Activated T-helper 1 cell treated with anti-CD3 and anti-CD28 coated beads, Interleukin-12 subunit alpha, Interleukin-12 subunit beta, Interleukin-2, Interleukin-4 antibody, amounts not matched to agents 30 ng/mL and 10 ng/mL and 1 ng/mL, durations not matched to agents 14 hours and 24 hours and 36 hours (primary cell): ENCODE measurements at regions of chr20 and their contacts with region 1.

Region 1: DNA sequence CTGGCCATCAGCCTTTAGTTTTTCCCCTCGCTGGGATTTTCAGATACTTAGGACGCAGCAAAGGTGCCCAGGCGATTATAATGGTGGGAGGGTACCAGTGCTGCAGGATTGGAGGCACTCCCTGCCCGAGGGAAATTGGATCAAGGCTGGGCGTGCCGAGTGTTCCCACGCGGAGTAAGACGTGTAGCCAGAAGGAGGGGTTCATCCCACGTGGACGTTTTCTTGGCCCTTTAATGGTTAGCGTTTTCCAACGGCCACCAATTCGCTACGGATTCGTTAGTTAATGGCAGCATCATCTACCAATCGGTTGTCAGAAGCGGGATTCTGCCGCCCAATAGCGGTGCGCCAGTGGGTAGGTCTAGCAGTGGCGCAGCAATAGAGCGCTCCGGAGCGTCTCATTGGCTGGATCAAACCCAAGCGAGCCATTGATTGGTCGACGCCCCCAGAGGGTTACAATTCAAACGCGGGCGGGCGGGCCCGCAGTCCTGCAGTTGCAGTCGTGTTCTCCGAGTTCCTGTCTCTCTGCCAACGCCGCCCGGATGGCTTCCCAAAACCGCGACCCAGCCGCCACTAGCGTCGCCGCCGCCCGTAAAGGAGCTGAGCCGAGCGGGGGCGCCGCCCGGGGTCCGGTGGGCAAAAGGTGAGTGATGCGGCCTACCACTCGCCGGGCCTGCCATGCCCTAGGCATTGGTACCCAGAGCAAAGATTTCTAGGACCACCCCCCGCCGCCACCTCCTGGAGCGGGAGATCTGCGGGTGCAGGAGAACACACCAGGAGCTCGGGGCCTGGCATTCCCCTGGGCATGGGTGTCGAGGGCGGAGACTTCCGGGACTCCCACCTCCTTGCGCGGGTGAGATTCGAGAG is at the start of gene UBE2C:
- DNase-seq: peak; percentile 95
- H3K4me3 Mint-ChIP-seq: peak within 1 kb of the TSS; percentile 89
- H3K27ac Mint-ChIP-seq: peak within 1 kb of the TSS; percentile 82
- H3K4me1 Mint-ChIP-seq: peaks cover 35% of the 10 kb centered on the region
- H3K27me3 Mint-ChIP-seq: no peaks in the 10 kb centered on the region
- total RNA-seq, gene UBE2C: 114 and 118 TPM in 2 replicates

Region 2: GRCh38 chr20:45742581-45742980 is 69.8 kb before region 1 on chr20:
- intact Hi-C with region 1: no loop called
- DNase-seq: no peak
- H3K4me3 Mint-ChIP-seq: no peak overlapping the region
- H3K27ac Mint-ChIP-seq: no peak overlapping the region
- H3K4me1 Mint-ChIP-seq: no peaks in the 10 kb centered on the region
- H3K27me3 Mint-ChIP-seq: peaks cover 27% of the 10 kb centered on the region

Region 3: GRCh38 chr20:45792332-45792686 is 20.1 kb before region 1 on chr20:
- intact Hi-C with region 1: loop called (anchors 1 kb)
- DNase-seq: no peak
- H3K4me3 Mint-ChIP-seq: peak overlapping the region; percentile 82
- H3K27ac Mint-ChIP-seq: peak overlapping the region; percentile 89
- H3K4me1 Mint-ChIP-seq: peaks cover 24% of the 10 kb centered on the region
- H3K27me3 Mint-ChIP-seq: peaks cover 3% of the 10 kb centered on the region

Region 4: GRCh38 chr20:45833030-45833882 is 20.9 kb after region 1 on chr20 and contains the start of gene SNX21:
- intact Hi-C with region 1: loop called (anchors 1 kb)
- DNase-seq: peak; percentile 12
- H3K4me3 Mint-ChIP-seq: peak within 1 kb of the TSS; percentile 85
- H3K27ac Mint-ChIP-seq: peak within 1 kb of the TSS; percentile 31
- H3K4me1 Mint-ChIP-seq: peaks cover 9% of the 10 kb centered on the region
- H3K27me3 Mint-ChIP-seq: peaks cover 4% of the 10 kb centered on the region
- total RNA-seq, gene SNX21: 0.75 and 1.1 TPM in 2 replicates

Region 5: DNA sequence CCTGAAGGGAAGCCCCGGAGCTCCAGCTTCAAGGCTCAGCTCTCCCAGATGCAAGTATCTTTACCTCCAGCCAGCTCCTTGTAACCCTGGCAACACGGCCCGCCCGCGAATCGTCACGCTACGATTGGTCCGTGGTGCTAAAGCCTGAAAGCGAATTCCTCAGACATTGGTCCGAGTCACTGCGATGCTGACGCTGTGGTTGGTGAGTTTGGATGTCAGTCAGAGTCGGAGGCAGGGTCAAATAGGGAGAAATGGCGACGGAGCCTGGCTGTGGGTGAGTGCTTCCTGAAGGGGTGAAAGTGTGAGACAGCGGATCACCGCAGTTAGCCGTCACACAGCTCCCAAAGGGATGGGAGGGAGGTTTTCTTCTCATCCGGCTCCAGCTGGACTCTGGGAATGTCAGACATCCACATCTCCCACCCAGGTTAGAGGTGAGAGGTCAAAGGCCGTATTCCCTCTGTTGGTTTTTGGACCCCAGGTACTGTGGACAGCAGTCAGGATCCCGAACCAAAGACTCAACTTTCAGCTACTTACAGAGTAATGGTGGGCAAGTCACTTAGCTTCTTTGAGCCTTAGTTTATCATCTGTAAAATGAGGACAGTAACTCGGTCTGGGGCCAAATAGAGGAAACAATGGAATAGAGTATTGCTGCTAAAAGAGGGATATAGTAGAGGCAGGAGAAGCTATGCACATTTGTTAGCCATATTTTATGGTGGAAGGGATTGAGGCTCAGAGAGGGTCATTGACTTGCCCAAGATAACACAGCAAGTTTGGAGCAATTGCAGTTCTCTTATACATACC is 68.8 kb after region 1 on chr20 and contains the start of gene ZSWIM1:
- intact Hi-C with region 1: loop called (anchors 1 kb)
- DNase-seq: peak; percentile 96
- H3K4me3 Mint-ChIP-seq: peak within 1 kb of the TSS; percentile 84
- H3K27ac Mint-ChIP-seq: peak within 1 kb of the TSS; percentile 72
- H3K4me1 Mint-ChIP-seq: peaks cover 45% of the 10 kb centered on the region
- H3K27me3 Mint-ChIP-seq: peaks cover 2% of the 10 kb centered on the region
- total RNA-seq, gene ZSWIM1: 7.5 and 7.8 TPM in 2 replicates